Heart right ventricle (tissue), 16 donors: ENCODE measurements at regions of chr18 and their contacts with region 1.

Region 1: GRCh38 chr18:26090130-26091046 is at the start of gene SS18:
- DNase-seq: peak; percentile 95
- ATAC-seq: peak; percentile 96 to 99 (median 98)
- H3K4me3 ChIP-seq: peak within 1 kb of the TSS; percentile 72 to 93 (median 88)
- H3K27ac ChIP-seq: peak within 1 kb of the TSS; percentile 85 to 99 (median 98)
- H3K4me1 ChIP-seq: peaks cover 0 to 36% (median 27%) of the 10 kb centered on the region in 9 donors
- H3K27me3 ChIP-seq: no peaks in the 10 kb centered on the region
- CTCF ChIP-seq: peak in 4 of 9 donors; percentile 7 to 23 (median 14)
- total RNA-seq, gene SS18: 24.2 to 41.8 (median 34.4) TPM

Region 2: GRCh38 chr18:26164571-26164970 is 74.2 kb after region 1 on chr18:
- intact Hi-C with region 1: loop called in 1 of 10 experiments (anchors 10 kb)
- DNase-seq: no peak
- ATAC-seq: no peak
- H3K4me3 ChIP-seq: no peak overlapping the region
- H3K27ac ChIP-seq: no peak overlapping the region
- H3K4me1 ChIP-seq: no peaks in the 10 kb centered on the region
- H3K27me3 ChIP-seq: no peaks in the 10 kb centered on the region
- CTCF ChIP-seq: no peak

Region 3: DNA sequence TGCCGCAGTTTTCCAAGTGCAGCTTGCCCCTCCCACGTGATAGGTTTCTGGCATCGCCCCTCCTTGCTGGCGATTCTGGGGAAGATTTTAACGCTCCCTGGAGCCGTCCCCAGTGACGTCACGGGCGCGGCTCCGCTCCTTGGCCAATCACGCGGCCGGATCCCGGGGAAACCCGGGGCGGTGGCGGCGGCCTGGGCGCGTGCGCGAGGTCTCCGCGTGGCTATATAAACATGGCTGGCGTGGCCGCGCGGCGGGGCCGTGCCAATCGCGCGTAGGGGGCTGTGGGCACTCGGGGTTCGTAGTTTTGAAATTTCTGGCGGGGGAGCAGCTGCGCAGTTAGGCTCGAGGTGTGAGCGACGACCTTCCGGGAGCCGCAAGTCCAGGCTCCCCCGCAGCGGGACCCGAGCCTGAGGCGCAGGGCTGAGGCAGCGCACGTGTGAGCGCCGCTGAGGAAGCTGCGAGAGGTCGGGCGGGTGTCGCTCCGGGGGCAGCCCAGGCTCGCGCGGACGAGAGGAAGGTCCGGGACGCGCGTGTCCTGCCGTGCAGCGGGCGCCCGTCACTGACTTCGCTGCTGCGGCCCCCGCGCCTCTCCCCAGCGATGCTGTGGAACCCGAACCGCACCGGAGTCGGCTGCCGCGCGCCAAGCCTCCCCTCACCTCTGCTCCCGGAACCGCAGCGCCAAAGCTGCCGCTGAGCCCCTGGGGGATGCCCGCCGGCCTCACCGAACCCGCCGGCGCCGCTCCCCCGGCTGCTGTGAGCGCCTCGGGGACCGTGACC is 136.0 kb after region 1 on chr18 and contains the start of gene TAF4B:
- intact Hi-C with region 1: loop called in 5 of 10 experiments (anchors 2 to 10 kb)
- DNase-seq: peak; percentile 92 to 94
- ATAC-seq: peak; percentile 98 to 100 (median 99)
- H3K4me3 ChIP-seq: peak within 1 kb of the TSS; percentile 68 to 89 (median 80)
- H3K27ac ChIP-seq: peak within 1 kb of the TSS; percentile 3 to 76 (median 48)
- H3K4me1 ChIP-seq: peaks cover 0 to 25% (median 9%) of the 10 kb centered on the region in 9 donors
- H3K27me3 ChIP-seq: peaks cover 0 to 7% (median 0%) of the 10 kb centered on the region in 7 donors
- CTCF ChIP-seq: no peak
- total RNA-seq, gene TAF4B: 1.1 to 1.8 (median 1.5) TPM